ENCODE measurements at regions of chr3 and their contacts with region 1.

Region 1: DNA sequence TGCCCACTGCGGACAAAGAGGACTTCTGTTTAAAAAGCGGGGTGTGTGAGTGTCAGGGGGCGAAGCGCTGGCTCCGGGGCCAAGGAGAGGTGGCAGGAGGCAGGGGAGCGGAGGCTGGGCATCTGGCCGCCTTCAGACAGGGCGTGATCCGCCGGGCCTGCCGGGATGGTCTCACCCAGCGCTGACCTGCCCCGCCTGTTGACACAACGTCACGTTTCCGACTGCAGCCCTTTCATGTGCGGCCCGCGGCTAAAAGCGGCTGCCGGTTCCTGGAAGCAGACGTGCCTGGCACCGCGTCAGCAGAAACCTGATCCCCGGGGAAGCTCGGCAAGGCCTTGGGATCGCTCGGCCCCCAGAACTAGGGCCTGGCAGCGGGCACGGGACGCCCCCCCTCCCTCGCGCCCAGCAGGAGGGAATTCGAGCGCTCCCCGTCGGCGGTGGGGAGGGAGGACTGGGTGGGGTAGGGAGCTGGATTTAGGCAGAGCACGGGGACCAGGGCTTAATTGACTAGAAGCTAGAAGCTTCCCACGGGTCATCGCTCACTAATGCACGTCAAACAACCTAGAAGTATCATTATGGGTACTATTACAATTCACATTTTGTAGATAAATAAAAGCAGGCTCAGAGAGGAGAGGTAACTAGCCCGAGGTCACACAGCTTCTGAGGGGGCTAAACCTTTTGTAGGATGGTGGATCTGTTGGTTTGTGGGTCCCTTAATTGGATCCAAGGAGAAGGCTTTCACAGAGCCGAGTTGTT is 7.7 kb downstream of the BHLHE40 start:
- DNase-seq: peak; percentile 49 to 78 (median 72)
- H3K4me3 ChIP-seq: peak overlapping the region; percentile 57
- H3K4me3 Mint-ChIP-seq: peak overlapping the region; percentile 84 to 92 (median 85)
- H3K27ac ChIP-seq: peak overlapping the region; percentile 81
- H3K27ac Mint-ChIP-seq: peak overlapping the region; percentile 84 to 99 (median 96)
- H3K4me1 ChIP-seq: peaks cover 46% of the 10 kb centered on the region
- H3K4me1 Mint-ChIP-seq: peaks cover 49 to 73% (median 65%) of the 10 kb centered on the region in 3 donors
- H3K27me3 ChIP-seq: no peaks in the 10 kb centered on the region
- H3K27me3 Mint-ChIP-seq: peaks cover 0 to 4% of the 10 kb centered on the region in 2 donors

Region 2: DNA sequence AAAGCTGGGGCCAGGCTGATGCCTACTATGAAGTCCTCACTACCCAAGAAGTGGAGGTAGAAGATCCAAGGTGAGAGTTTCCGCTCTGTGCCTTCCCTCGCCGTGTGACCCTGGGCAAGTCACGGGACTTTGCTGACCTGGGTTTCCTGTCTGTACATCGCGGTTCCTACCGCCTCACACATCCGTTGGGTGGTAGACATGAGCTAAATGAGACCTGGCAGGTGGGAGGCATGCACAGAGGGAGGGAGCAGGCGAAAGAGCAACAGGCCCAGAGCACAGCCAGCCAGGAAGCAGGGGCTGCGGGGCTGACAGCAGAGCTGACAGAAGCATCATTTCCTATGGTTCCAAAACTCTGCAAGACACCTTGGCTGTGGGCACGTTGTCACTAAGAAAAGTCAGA is 165.0 kb before region 1 on chr3:
- CTCF ChIA-PET with region 1: interaction called, 19 read pairs
- POLR2A ChIA-PET with region 1: no interaction called
- DNase-seq: peak; percentile 79 to 93 (median 85)
- H3K4me3 ChIP-seq: no peak overlapping the region
- H3K4me3 Mint-ChIP-seq: peak overlapping the region; percentile 1 to 74 (median 63)
- H3K27ac ChIP-seq: peak overlapping the region; percentile 5
- H3K27ac Mint-ChIP-seq: peak overlapping the region; percentile 89 to 99 (median 99)
- H3K4me1 ChIP-seq: peaks cover 58% of the 10 kb centered on the region
- H3K4me1 Mint-ChIP-seq: peaks cover 53 to 71% (median 68%) of the 10 kb centered on the region in 3 donors
- H3K27me3 ChIP-seq: no peaks in the 10 kb centered on the region
- H3K27me3 Mint-ChIP-seq: no peaks in the 10 kb centered on the region

Region 3: GRCh38 chr3:5187156-5187919 is 200.4 kb after region 1 on chr3 and contains the start of gene EDEM1:
- CTCF ChIA-PET with region 1: no interaction called
- POLR2A ChIA-PET with region 1: no interaction called
- DNase-seq: peak; percentile 89 to 95 (median 91)
- H3K4me3 ChIP-seq: peak within 1 kb of the TSS; percentile 84
- H3K4me3 Mint-ChIP-seq: peak within 1 kb of the TSS; percentile 93 to 100 (median 100)
- H3K27ac ChIP-seq: peak within 1 kb of the TSS; percentile 93
- H3K27ac Mint-ChIP-seq: peak within 1 kb of the TSS; percentile 95 to 100 (median 98)
- H3K4me1 ChIP-seq: peaks cover 23% of the 10 kb centered on the region
- H3K4me1 Mint-ChIP-seq: peaks cover 32 to 44% (median 36%) of the 10 kb centered on the region in 3 donors
- H3K27me3 ChIP-seq: no peaks in the 10 kb centered on the region
- H3K27me3 Mint-ChIP-seq: no peaks in the 10 kb centered on the region
- total RNA-seq, gene EDEM1: 120 to 121 TPM

Measured in CD8-positive, alpha-beta memory T cell (primary cell).